ENCODE measurements at regions of chr14 and their contacts with region 1.

Region 1: DNA sequence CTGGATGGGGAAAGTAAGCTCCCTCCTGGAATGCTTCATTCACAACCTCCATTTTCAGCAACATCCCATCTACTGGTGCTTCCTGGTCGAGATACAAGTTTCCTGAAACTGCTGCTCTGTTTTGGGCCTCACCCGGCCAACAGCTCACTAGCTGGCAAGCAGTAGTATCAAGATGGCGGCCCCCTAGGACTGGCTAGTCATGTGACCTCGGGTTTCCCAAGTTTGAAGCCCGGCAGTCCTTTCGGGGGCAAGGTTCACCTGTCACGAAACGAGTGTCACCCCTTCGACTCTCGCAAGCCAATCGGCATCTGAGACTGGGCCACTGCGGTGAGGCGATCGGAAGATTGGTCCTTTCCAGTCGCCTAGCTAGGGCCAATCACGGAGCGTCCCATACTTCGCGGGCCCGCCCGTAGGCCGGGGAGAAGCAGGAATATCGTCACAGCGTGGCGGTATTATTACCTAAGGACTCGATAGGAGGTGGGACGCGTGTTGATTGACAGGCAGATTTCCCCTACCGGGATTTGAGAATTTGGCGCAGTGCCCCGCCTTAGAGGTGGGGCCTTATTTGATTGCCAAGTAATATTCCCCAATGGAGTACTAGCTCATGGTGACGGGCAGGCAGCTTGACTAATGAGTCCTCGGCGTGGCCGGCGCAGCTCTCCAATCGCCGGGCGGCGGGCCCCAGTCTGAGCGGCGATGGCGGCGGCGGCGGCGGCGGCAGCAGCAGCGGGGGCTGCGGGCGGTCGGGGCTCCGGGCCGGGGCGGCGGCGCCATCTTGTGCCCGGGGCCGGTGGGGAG is at the start of gene PABPN1:
- DNase-seq: peak; percentile 100
- ATAC-seq: peak; percentile 90
- H3K4me3 Mint-ChIP-seq: peak within 1 kb of the TSS; percentile 91
- H3K27ac Mint-ChIP-seq: peak within 1 kb of the TSS; percentile 94
- H3K4me1 Mint-ChIP-seq: peaks cover 32% of the 10 kb centered on the region
- H3K27me3 Mint-ChIP-seq: no peaks in the 10 kb centered on the region
- total RNA-seq, gene PABPN1: 225 to 269 TPM

Region 2: GRCh38 chr14:23057757-23058653 is 263.0 kb before region 1 on chr14:
- CTCF ChIA-PET with region 1: no interaction called
- DNase-seq: peak; percentile 92
- ATAC-seq: peak; percentile 77
- H3K4me3 Mint-ChIP-seq: peak overlapping the region; percentile 77
- H3K27ac Mint-ChIP-seq: no peak overlapping the region
- H3K4me1 Mint-ChIP-seq: peaks cover 16% of the 10 kb centered on the region
- H3K27me3 Mint-ChIP-seq: peaks cover 8% of the 10 kb centered on the region

Region 3: DNA sequence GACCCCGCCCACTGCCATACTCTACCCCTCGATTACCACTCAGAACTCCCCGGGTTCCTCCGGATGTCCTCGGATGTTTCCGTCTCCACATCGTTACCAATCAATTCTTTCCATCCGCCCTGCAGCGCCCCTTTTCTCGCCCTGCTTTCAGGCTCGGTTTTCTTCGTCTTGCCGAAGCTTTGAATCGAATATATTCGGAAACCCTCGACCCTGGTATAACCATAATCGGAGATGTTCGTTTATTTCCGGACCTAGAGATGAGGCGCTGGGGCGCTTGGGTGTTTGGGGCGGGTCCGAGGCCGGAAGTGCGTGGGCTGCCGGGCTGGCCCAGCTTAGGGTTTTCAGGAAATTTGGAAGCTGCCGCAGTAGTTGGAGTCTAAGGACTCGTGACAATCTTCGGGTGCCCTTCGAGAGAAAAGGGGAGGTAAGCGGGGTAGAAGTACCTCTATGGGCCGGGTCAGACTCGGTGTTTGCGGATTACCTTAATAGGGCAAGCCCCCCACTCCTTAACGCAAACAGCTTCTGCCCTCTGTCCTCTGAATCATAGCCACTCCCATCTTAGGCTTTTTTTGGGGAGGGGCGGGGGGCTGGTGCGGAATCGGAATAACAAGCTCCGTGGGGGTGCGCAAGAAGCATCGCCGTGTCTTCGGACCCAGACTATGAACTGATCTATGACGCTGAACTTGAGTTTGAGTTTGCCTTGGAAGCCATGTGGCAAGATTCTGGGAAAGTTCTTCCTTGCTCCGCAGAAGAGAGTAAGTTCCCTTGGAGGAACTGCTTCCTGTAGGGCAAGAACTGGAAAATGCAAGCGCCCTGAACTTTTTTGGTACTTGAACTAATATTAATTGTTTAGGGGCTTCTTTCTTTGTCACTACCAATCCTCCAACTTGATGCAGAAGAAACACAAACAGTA is 225.5 kb before region 1 on chr14 and contains the start of gene C14orf119:
- CTCF ChIA-PET with region 1: interaction called, 11 read pairs
- DNase-seq: peak; percentile 100
- ATAC-seq: peak; percentile 94
- H3K4me3 Mint-ChIP-seq: no peak within 1 kb of the TSS
- H3K27ac Mint-ChIP-seq: no peak within 1 kb of the TSS
- H3K4me1 Mint-ChIP-seq: peaks cover 36% of the 10 kb centered on the region
- H3K27me3 Mint-ChIP-seq: no peaks in the 10 kb centered on the region
- total RNA-seq, gene C14orf119: 44.6 to 53.2 TPM

Region 4: DNA sequence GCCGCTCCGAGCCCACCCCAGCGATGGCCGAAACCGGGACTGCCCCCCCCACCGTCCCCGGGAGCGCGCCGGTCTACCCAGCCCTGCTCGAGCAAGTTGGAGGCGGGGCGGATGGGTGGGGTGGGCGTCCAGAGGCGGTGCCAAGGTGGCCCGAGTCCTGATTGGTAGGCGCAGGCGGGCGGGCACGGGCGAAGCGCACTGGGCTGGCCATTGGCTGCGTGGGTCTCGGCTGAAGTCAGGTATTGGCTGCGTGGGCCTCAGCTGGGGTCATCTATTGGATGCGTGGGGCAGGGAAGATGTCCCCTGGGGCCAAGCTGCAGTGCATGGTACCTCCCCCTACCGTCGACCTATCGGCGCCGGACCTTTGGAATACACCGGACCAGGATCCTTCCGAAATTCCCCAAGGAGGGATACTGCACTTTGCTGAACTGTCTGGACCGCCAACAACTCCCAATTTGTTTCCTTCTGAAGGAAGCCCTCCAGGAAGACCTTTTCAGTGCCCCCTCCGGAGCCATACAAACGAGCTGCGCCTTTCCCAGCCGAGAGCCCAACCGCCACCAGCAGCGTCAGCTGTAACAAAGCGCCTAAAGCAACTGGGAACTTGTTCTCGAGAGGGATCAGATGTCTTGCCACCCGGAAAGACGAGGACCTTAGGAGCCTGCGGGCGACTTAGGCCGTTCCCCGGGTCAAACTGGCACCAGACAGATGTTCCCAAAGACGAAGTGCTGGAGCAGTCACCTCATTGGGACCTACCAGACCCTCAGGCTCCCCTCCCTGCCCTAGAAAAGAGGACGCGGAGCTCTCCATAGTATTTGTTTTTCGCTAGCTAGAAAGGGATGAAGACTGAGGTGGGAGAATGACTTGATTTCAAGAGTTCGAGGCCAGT is 34.7 kb before region 1 on chr14 and contains the start of gene HOMEZ:
- CTCF ChIA-PET with region 1: interaction called, 10 read pairs
- DNase-seq: peak; percentile 99
- ATAC-seq: peak; percentile 99
- H3K4me3 Mint-ChIP-seq: peak within 1 kb of the TSS; percentile 86
- H3K27ac Mint-ChIP-seq: peak within 1 kb of the TSS; percentile 88
- H3K4me1 Mint-ChIP-seq: peaks cover 19% of the 10 kb centered on the region
- H3K27me3 Mint-ChIP-seq: no peaks in the 10 kb centered on the region
- total RNA-seq, gene HOMEZ: 11.4 to 12.4 TPM

Region 5: GRCh38 chr14:23301288-23301968 is 19.5 kb before region 1 on chr14:
- CTCF ChIA-PET with region 1: interaction called, 119 read pairs
- DNase-seq: peak; percentile 98
- ATAC-seq: peak; percentile 85
- H3K4me3 Mint-ChIP-seq: peak overlapping the region; percentile 96
- H3K27ac Mint-ChIP-seq: peak overlapping the region; percentile 92
- H3K4me1 Mint-ChIP-seq: peaks cover 25% of the 10 kb centered on the region
- H3K27me3 Mint-ChIP-seq: peaks cover 12% of the 10 kb centered on the region

Region 6: GRCh38 chr14:23379366-23380196 is 58.6 kb after region 1 on chr14:
- CTCF ChIA-PET with region 1: interaction called, 37 read pairs
- DNase-seq: peak; percentile 71
- ATAC-seq: peak; percentile 86
- H3K4me3 Mint-ChIP-seq: no peak overlapping the region
- H3K27ac Mint-ChIP-seq: no peak overlapping the region
- H3K4me1 Mint-ChIP-seq: peaks cover 8% of the 10 kb centered on the region
- H3K27me3 Mint-ChIP-seq: peaks cover 7% of the 10 kb centered on the region

Measured in activated CD8-positive, alpha-beta memory T cell treated with anti-CD3 and anti-CD28 coated beads, Interleukin-2, amount 10 ng/mL, durations not matched to agents 7 days and 5 days (primary cell).